ENCODE measurements at regions of chr7 and their contacts with region 1.

Region 1: DNA sequence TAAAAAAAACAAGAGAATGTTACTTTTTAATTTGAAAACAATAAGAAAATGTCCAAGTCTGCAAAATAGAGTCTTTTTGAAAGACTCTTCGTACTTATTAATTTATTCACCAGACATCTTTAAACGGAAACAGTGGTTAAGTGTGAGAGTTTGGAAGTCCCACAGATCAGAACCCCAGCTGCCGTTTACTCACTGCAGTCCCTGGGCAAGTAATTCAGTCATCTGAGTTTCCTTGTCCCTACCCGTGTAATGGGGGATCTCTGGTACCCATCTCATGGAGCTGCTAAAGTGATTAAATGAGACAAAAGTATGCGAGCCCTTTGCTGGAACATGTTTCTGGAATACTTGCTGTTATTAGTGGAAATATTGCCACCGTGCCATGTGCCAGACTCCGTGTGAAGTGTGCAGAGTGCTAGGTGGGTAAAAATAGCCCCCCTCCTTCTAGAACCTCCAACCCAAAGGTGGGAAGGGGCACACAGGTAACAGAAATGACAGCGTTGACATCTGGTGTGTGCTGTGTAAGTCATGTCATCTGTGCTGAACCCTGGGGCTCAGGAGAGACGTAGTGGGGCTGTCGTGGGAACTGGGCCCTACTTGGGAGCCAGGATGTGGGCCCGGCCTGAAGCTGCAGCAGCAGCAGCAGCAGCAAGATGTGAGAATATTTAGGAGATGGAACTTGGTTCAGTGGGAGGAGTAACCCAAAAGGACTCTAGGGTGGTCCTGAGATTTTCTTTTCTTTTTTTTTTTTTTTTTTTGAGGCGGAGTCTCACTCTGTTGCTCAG is 140.5 kb downstream of the CUX1 start:
- DNase-seq: no peak
- H3K4me3 ChIP-seq: no peak overlapping the region
- H3K27me3 ChIP-seq: no peaks in the 10 kb centered on the region
- CTCF ChIP-seq: no peak

Region 2: GRCh38 chr7:101702362-101702850 is 255.5 kb before region 1 on chr7:
- CTCF ChIA-PET with region 1: no interaction called
- POLR2A ChIA-PET with region 1: no interaction called
- DNase-seq: no peak
- H3K4me3 ChIP-seq: no peak overlapping the region
- H3K27me3 ChIP-seq: peaks cover 10% of the 10 kb centered on the region
- CTCF ChIP-seq: no peak

Region 3: DNA sequence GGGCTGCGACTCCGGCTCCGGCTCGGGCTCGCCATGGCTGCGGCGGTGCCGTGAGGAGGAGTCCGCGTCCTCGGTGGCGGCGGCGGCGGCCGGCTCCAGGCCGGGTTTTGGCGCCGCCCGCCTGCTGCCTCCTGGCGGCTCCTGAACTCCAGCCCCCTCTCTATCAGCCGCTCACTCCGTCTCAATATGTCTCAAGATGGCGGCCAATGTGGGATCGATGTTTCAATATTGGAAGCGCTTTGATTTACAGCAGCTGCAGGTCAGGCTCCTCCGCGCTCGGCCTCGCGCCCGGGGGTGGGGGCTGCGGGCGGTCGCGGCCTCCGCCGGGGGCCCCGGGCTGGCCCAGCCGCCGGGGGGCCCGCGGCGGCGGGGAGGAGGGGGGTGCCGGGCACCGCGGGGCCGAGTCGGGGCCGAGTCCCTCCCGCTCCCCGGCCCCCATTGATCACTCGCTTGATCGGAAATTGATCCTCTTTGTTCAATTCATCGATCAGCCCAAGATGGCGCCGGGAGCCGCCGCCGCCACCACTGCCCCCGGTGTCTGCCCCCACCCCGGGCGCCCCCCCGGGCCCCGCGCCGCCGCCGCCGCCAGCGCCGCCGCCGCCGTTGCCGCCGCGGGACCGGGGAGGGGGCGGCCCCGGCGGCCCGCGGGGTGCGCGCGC is 142.0 kb before region 1 on chr7:
- CTCF ChIA-PET with region 1: no interaction called
- POLR2A ChIA-PET with region 1: interaction called, 28 read pairs
- DNase-seq: no peak
- H3K4me3 ChIP-seq: peak overlapping the region; percentile 77
- H3K27me3 ChIP-seq: no peaks in the 10 kb centered on the region
- CTCF ChIP-seq: peak; percentile 8; the same call in 1 of the 2 replicates

Region 4: DNA sequence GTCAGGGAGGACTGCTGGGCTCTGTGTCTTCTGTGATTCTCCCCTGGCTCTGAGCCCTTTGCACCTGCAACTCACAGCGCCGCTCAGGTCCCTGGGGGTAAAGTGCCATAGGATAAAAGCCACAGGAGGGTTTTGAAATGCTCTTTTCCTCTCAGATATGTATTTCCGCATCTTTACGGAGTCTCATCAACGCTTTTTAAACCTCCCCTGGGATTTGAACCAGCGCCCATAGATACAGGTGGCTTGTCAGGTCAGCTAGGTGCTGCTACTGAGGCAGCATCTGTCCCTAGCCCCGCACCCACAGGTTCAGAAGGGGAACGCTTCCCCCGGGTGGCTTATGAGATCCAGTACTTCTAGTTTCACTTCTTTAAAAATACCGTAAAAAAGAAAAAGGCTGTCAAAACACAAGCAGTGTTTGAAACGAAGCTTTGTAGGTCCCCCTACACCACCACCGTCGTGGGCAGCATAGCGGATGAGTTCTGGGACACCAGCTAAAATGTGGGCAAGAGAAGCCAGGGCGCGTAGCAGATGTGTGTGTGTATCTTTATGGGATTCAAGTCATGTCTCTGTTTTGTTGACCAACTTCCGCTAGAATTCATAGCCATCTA is 33.0 kb after region 1 on chr7:
- CTCF ChIA-PET with region 1: no interaction called
- POLR2A ChIA-PET with region 1: no interaction called
- DNase-seq: no peak
- H3K4me3 ChIP-seq: no peak overlapping the region
- H3K27me3 ChIP-seq: no peaks in the 10 kb centered on the region
- CTCF ChIP-seq: no peak

Measured in BJ (cell line).